GM18951 (cell line): ENCODE measurements at regions of chr9 and their contacts with region 1.

Region 1: DNA sequence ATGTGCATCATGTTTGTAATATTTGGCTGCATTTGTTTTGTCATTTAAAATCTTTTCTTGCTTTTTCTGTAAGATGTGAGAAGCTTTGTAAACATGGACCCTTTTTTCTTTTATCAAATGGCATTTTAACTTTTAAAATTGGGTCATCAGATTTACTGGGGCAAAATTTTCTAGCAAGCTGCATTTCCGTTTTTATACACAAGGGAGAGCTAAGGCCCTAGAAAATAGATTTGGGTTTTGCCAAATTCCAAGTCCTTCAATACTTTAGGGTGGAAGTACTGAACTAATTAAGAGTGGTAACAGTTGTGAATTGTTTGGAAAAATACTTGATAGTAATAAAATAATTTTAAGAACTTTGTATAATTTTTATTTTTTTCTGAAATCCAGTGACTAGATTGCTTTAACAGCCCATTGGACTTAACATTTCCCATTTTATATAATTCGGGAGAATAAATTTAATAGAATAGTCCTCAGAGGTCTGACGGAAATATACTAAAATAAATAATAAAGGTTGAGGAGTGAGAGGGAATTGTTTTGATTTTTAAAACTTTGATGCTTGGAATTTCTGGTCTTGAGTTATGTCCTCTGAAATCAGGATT is 117.4 kb downstream of the SMARCA2 start:
- POLR2A ChIP-seq: no peak

Region 2: DNA sequence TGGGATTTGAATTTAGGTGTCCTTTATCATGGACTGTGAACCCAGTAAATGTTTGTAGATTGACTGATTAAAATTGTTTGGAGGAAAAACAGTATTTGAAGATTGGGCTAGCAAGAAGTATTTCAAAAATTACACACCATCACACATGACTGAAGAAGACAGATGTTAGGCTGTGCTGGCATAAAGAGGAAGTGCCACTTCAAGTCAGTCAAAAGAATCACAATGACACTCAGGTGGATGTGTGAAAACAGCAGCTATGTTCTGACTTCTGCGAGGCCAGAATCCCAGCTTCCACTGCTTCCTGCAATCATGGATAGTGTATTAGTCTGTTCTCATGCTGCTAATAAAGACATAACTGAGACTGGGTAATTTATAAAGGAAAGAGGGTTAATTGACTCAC is 689.1 kb before region 1 on chr9:
- in situ Hi-C with region 1: no loop called
- POLR2A ChIP-seq: no peak

Region 3: GRCh38 chr9:1910269-1910811 is 222.2 kb before region 1 on chr9:
- in situ Hi-C with region 1: no loop called
- POLR2A ChIP-seq: no peak

Region 4: GRCh38 chr9:2727966-2728613 is 595.5 kb after region 1 on chr9:
- in situ Hi-C with region 1: loop called (anchors 25 kb)
- POLR2A ChIP-seq: no peak